ENCODE measurements at regions of chr1 and their contacts with region 1.

Region 1: GRCh38 chr1:177164380-177165068 is at the start of gene ASTN1:
- DNase-seq: peak in 8 of 10 donors; percentile 24 to 76 (median 56)
- H3K4me3 ChIP-seq: peak within 1 kb of the TSS; percentile 56 to 88 (median 75)
- H3K27ac ChIP-seq: peak within 1 kb of the TSS in 57 of 59 donors; percentile 52 to 94 (median 83)
- H3K27me3 ChIP-seq: no peaks in the 10 kb centered on the region
- CTCF ChIP-seq: peak in 1 of 56 donors; percentile 9
- total RNA-seq, gene ASTN1: 51.9 to 159 (median 114) TPM

Region 2: DNA sequence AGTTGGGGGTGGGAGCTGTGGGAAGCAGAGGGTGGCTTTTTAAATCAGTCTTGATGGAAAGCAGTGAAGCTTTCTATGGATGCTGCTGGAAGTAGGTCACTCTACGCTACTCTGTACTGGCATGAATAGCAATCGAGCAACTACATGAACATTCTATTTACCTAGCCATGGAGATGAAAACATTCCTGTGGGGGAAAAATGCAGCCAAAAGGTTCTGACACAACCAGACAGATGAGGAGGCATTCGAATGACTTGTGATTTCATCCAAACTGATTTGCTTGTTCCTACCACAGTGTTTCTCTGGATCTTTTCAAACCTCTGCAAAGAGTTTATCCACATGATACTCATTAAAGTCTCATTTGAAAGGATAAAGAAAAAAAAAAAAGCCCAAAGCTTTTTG is 95.0 kb before region 1 on chr1:
- intact Hi-C with region 1: loop called in 1 of 2 experiments (anchors 10 kb)
- DNase-seq: no peak
- H3K4me3 ChIP-seq: peak overlapping the region in 1 of 59 donors; percentile 8
- H3K27ac ChIP-seq: peak overlapping the region in 39 of 59 donors; percentile 3 to 73 (median 44)
- H3K27me3 ChIP-seq: no peaks in the 10 kb centered on the region
- CTCF ChIP-seq: no peak

Region 3: DNA sequence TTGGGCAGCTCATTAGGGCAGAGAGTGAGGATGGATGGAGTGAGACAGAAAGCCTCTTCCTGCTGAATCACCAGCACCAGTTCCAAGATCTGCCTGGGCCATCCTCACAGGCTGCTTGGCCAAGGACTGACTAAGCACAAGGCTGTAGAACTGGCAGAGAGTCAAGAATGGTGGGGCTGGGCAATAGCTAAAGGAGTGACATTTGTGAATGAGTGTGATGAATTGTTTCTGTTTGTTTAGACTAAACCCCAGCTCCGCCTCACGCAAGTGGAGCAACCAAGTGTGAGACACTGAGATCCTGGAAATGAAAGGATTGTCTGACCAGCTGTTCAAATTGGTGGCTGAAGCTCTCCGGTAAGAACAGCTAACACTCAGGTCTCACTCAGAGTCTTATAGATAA is 44.8 kb after region 1 on chr1:
- intact Hi-C with region 1: no loop called
- DNase-seq: peak in 9 of 10 donors; percentile 46 to 85 (median 65)
- H3K4me3 ChIP-seq: peak overlapping the region in 9 of 59 donors; percentile 2 to 27 (median 19)
- H3K27ac ChIP-seq: peak overlapping the region in 38 of 59 donors; percentile 11 to 85 (median 44)
- H3K27me3 ChIP-seq: no peaks in the 10 kb centered on the region
- CTCF ChIP-seq: no peak